Ascending aorta (tissue), 2 donors: ENCODE measurements at regions of chr6 and their contacts with region 1.

Region 1: GRCh38 chr6:110873981-110874879 is at the start of gene AMD1:
- DNase-seq: peak; percentile 95 to 99
- H3K4me3 ChIP-seq: peak within 1 kb of the TSS; percentile 81 to 95
- H3K27ac ChIP-seq: peak within 1 kb of the TSS; percentile 95 to 96
- H3K4me1 ChIP-seq: peaks cover 0 to 21% of the 10 kb centered on the region in 2 donors
- H3K27me3 ChIP-seq: no peaks in the 10 kb centered on the region
- CTCF ChIP-seq: no peak
- total RNA-seq, gene AMD1: 19.1 TPM

Region 2: DNA sequence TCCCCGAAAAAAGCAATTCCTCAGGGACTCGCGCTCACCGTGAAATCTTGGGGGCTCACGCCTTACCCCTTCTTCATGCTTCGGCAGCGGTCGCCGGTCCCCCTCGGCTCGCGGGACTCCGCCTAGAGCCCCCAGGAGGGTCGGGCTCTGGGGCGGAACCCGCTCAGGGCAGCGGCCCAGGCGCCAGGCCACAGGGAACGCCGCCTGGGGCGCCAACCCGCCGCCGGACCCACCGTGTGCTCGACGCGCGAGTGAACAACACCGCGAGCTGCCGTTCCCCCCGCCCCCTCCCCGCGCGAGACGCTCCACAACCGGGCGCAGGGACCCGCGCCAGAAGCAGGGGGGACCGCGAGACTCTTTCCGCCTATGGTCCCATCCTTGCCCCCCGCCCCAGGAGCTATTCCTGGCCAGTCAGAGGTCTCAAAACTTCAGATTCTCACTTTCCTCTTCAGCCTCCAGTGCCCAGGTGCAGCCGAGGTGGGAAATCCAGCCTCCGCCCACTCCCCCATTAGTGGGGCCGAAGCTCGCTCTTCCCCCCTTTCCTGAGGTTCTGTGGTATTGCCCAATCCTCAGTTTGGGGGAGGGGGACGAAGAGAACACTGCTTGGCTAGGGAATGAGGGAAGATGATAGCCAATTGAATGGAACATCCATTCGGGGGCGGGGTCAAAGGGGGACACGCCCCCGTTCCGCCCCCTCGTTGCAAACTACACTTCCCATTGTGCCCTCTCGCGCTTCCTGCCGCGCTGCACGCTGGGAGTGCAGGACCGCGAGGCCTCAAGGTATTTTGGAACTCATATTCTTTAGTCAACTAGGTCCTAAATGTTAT is 694.6 kb before region 1 on chr6 and contains the start of gene WASF1:
- intact Hi-C with region 1: loop called (anchors 5 kb)
- DNase-seq: peak; percentile 84 to 98
- H3K4me3 ChIP-seq: peak within 1 kb of the TSS; percentile 85 to 86
- H3K27ac ChIP-seq: peak within 1 kb of the TSS; percentile 81 to 83
- H3K4me1 ChIP-seq: peaks cover 3 to 22% of the 10 kb centered on the region in 2 donors
- H3K27me3 ChIP-seq: no peaks in the 10 kb centered on the region
- CTCF ChIP-seq: peak in 1 of 3 experiments; percentile 13
- total RNA-seq, gene WASF1: 0.53 TPM

Region 3: DNA sequence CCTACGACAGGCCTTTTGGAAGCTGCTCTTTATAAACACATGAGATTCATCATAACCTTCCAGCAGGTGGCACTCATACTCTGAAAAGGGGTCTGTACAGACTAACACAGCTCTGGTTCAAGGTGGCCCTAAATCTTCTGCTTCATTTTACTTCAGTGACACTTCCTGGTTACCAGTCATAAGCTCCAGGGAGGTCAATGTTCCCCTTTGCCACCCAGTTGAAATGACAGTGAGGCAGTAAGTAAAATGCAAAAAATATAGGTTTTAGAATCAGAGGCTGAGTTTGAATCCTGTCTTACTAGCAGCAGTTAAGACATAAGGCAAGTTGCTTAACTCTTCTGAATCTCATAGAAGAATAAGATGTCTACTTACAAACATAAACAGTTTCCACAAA is 191.8 kb before region 1 on chr6:
- intact Hi-C with region 1: loop called (anchors 5 kb)
- DNase-seq: peak in 1 of 2 donors; percentile 76
- H3K4me3 ChIP-seq: no peak overlapping the region
- H3K27ac ChIP-seq: peak overlapping the region in 1 of 2 donors; percentile 41
- H3K4me1 ChIP-seq: no peaks in the 10 kb centered on the region
- H3K27me3 ChIP-seq: no peaks in the 10 kb centered on the region
- CTCF ChIP-seq: peak; percentile 60 to 69 (median 67)

Region 4: DNA sequence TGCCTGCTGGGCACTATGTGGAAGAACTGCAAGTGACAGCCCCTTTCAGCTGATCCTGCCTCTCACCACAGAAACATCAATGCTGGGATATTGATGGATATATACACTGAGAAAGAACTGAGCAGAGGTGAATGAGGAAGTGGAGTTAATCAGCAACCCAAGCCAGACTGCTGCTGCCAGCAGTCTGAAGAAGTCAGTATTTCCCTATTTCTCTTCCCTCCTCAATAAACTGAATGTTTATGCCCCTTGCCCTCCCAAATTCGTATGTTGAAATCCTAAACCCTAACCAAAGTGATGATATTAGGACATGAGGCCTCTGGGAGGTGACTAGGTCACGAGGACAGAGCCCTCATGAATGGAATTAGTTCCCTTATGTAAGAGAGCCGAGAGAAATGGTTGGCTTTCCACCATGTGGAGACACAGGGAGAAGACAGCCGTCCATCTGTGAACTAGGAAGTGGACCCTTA is 135.3 kb before region 1 on chr6:
- intact Hi-C with region 1: no loop called
- DNase-seq: no peak
- H3K4me3 ChIP-seq: no peak overlapping the region
- H3K27ac ChIP-seq: no peak overlapping the region
- H3K4me1 ChIP-seq: no peaks in the 10 kb centered on the region
- H3K27me3 ChIP-seq: no peaks in the 10 kb centered on the region
- CTCF ChIP-seq: no peak

Region 5: DNA sequence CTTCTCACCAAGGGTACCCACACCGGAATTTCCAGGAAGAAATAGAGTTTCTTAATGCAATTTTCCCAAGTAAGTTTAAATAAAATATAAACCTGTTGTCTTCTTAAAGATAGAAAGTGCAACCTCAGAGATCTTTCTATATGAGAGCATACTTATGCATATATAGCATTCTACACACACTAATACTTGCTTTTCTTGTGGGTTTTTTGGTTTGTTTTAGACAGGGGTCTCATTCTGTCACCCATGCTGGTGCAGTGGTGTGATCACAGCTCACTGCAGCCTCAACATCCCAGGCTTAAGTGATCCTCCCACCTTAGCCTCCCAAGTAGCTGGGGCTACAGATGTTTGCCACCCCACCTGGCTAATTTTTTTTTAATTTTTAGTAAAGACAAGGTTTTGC is 16.1 kb after region 1 on chr6:
- intact Hi-C with region 1: no loop called
- DNase-seq: no peak
- H3K4me3 ChIP-seq: no peak overlapping the region
- H3K27ac ChIP-seq: no peak overlapping the region
- H3K4me1 ChIP-seq: no peaks in the 10 kb centered on the region
- H3K27me3 ChIP-seq: no peaks in the 10 kb centered on the region
- CTCF ChIP-seq: no peak

Region 6: GRCh38 chr6:110958329-110959192 is 84.3 kb after region 1 on chr6 and contains the start of gene GTF3C6:
- intact Hi-C with region 1: loop called (anchors 2 kb)
- DNase-seq: peak; percentile 82 to 97
- H3K4me3 ChIP-seq: peak within 1 kb of the TSS; percentile 81 to 90
- H3K27ac ChIP-seq: peak within 1 kb of the TSS; percentile 86 to 96
- H3K4me1 ChIP-seq: peaks cover 0 to 2% of the 10 kb centered on the region in 2 donors
- H3K27me3 ChIP-seq: no peaks in the 10 kb centered on the region
- CTCF ChIP-seq: no peak
- total RNA-seq, gene GTF3C6: 31.9 TPM

Region 7: GRCh38 chr6:111087106-111087835 is 213.0 kb after region 1 on chr6 and contains the start of gene SLC16A10:
- intact Hi-C with region 1: loop called (anchors 10 kb)
- DNase-seq: peak; percentile 42 to 87
- H3K4me3 ChIP-seq: peak within 1 kb of the TSS; percentile 71 to 85
- H3K27ac ChIP-seq: peak within 1 kb of the TSS in 1 of 2 donors; percentile 28
- H3K4me1 ChIP-seq: no peaks in the 10 kb centered on the region
- H3K27me3 ChIP-seq: no peaks in the 10 kb centered on the region
- CTCF ChIP-seq: peak in 1 of 3 experiments; percentile 13
- total RNA-seq, gene SLC16A10: 7.8 TPM